ENCODE measurements at regions of chr10 and their contacts with region 1.

Region 1: GRCh38 chr10:86585037-86585725 is 63.6 kb upstream of the WAPL start:
- DNase-seq: peak; percentile 51 to 87 (median 69)
- ATAC-seq: peak; percentile 99
- H3K4me3 ChIP-seq: no peak overlapping the region
- H3K27ac ChIP-seq: no peak overlapping the region
- H3K4me1 ChIP-seq: peaks cover 0 to 10% of the 10 kb centered on the region in 2 donors
- H3K27me3 ChIP-seq: no peaks in the 10 kb centered on the region
- CTCF ChIP-seq: peak; percentile 91 to 99

Region 2: GRCh38 chr10:86399879-86400704 is 185.1 kb before region 1 on chr10:
- intact Hi-C with region 1: loop called in 1 of 2 experiments (anchors 5 kb)
- DNase-seq: peak; percentile 84 to 97 (median 95)
- ATAC-seq: peak; percentile 97
- H3K4me3 ChIP-seq: peak overlapping the region; percentile 54 to 60
- H3K27ac ChIP-seq: peak overlapping the region; percentile 68 to 77
- H3K4me1 ChIP-seq: peaks cover 9 to 26% of the 10 kb centered on the region in 2 donors
- H3K27me3 ChIP-seq: peaks cover 9 to 61% of the 10 kb centered on the region in 2 donors
- CTCF ChIP-seq: peak; percentile 92 to 97

Region 3: DNA sequence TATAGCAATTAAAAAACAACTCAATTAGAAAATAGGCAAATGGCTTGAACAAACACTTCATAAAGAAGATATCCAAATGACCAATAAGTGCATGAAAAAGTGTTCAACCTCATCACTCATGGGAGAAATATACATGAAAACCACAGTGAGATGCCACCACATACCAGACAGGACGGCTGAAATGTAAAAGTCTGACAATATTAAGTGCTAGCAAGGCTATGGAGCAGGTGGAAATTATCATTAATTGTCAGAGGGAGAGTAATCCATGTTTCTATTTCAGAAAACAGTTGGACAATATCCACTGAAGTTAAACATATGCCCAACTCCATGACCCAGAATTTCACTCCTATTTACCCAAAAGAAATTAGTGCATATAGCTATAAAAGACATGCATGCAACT is 176.0 kb before region 1 on chr10:
- intact Hi-C with region 1: loop called in 1 of 2 experiments (anchors 5 kb)
- DNase-seq: no peak
- ATAC-seq: no peak
- H3K4me3 ChIP-seq: no peak overlapping the region
- H3K27ac ChIP-seq: no peak overlapping the region
- H3K4me1 ChIP-seq: peaks cover 7 to 14% of the 10 kb centered on the region in 2 donors
- H3K27me3 ChIP-seq: no peaks in the 10 kb centered on the region
- CTCF ChIP-seq: no peak

Region 4: DNA sequence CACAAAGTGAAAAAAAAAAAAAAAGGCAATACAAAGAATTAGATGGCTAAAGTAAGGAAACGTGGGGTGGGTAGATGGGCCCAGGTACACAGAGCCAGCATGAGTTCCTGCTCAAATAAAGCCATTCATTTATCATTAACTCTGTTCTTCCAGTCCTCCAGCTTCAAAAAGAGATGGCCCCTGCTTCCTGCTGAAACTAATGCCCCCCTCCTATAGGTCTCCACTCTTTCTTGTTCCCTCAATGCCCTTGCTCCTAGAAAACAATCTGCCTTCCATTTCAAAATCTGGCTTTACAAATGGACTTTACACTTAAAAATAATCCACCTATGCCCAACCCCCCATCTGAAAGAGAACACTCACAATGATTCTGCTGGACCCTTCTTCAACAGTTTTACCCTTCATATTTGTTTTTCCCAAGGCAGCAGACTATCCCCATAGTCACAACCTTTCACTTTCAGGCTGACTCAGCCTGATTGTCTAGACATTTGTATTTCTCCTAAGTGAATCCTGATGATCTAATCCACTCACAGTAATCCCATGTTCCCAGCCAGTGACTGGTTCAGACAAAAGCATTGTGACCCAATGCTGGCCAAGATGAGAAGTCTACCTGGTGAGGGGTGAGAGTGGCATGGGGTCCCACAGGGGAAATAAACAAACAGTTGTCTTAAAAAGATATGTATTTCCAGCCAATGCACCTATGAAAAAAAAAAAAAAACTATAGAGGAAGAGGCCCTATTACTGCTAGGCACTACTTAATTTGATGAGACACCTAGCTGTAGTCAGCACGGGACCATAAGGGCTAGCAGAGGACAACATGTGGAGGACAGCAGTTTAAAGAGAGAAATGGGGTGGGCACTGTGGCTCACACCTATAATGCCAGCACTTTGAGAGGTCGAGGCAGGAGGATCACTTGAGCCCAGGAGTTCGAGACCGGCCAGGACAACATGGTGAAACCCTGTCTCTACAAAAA is 144.0 kb before region 1 on chr10:
- intact Hi-C with region 1: no loop called
- DNase-seq: no peak
- ATAC-seq: peak; percentile 48
- H3K4me3 ChIP-seq: no peak overlapping the region
- H3K27ac ChIP-seq: peak overlapping the region in 1 of 2 donors; percentile 38
- H3K4me1 ChIP-seq: peaks cover 0 to 24% of the 10 kb centered on the region in 2 donors
- H3K27me3 ChIP-seq: no peaks in the 10 kb centered on the region
- CTCF ChIP-seq: no peak

Measured in left lung (tissue), 14 donors.